ENCODE measurements at regions of chr5 and their contacts with region 1.

Region 1: GRCh38 chr5:118628660-118629354 is 359.5 kb downstream of the DTWD2 start:
- DNase-seq: no peak
- ATAC-seq: no peak
- H3K4me3 ChIP-seq: no peak overlapping the region
- H3K4me3 Mint-ChIP-seq: no peak overlapping the region
- H3K27ac ChIP-seq: no peak overlapping the region
- H3K27ac Mint-ChIP-seq: no peak overlapping the region
- H3K4me1 ChIP-seq: no peaks in the 10 kb centered on the region
- H3K4me1 Mint-ChIP-seq: no peaks in the 10 kb centered on the region
- H3K27me3 ChIP-seq: no peaks in the 10 kb centered on the region
- H3K27me3 Mint-ChIP-seq: no peaks in the 10 kb centered on the region
- CTCF ChIP-seq: no peak

Region 2: GRCh38 chr5:118597543-118597942 is 31.3 kb before region 1 on chr5:
- CTCF ChIA-PET with region 1: no interaction called
- POLR2A ChIA-PET with region 1: no interaction called
- intact Hi-C with region 1: loop called in 1 of 2 experiments (anchors 1 kb)
- DNase-seq: no peak
- ATAC-seq: no peak
- H3K4me3 ChIP-seq: no peak overlapping the region
- H3K4me3 Mint-ChIP-seq: no peak overlapping the region
- H3K27ac ChIP-seq: no peak overlapping the region
- H3K27ac Mint-ChIP-seq: no peak overlapping the region
- H3K4me1 ChIP-seq: no peaks in the 10 kb centered on the region
- H3K4me1 Mint-ChIP-seq: no peaks in the 10 kb centered on the region
- H3K27me3 ChIP-seq: no peaks in the 10 kb centered on the region
- H3K27me3 Mint-ChIP-seq: no peaks in the 10 kb centered on the region
- CTCF ChIP-seq: no peak

Region 3: GRCh38 chr5:118698774-118699173 is 70.0 kb after region 1 on chr5:
- CTCF ChIA-PET with region 1: no interaction called
- POLR2A ChIA-PET with region 1: no interaction called
- intact Hi-C with region 1: no loop called
- DNase-seq: no peak
- ATAC-seq: no peak
- H3K4me3 ChIP-seq: no peak overlapping the region
- H3K4me3 Mint-ChIP-seq: no peak overlapping the region
- H3K27ac ChIP-seq: no peak overlapping the region
- H3K27ac Mint-ChIP-seq: no peak overlapping the region
- H3K4me1 ChIP-seq: no peaks in the 10 kb centered on the region
- H3K4me1 Mint-ChIP-seq: no peaks in the 10 kb centered on the region
- H3K27me3 ChIP-seq: no peaks in the 10 kb centered on the region
- H3K27me3 Mint-ChIP-seq: no peaks in the 10 kb centered on the region
- CTCF ChIP-seq: no peak

Measured in CD8-positive, alpha-beta T cell (primary cell).